Psoas muscle (tissue), 8 donors: ENCODE measurements at regions of chr10 and their contacts with region 1.

Region 1: GRCh38 chr10:5813287-5814109 is at the start of gene GDI2:
- DNase-seq: peak; percentile 96 to 97
- ATAC-seq: peak; percentile 97 to 98 (median 98)
- H3K4me3 ChIP-seq: peak within 1 kb of the TSS; percentile 95
- H3K27ac ChIP-seq: peak within 1 kb of the TSS; percentile 95
- H3K4me1 ChIP-seq: peaks cover 40% of the 10 kb centered on the region
- H3K27me3 ChIP-seq: no peaks in the 10 kb centered on the region
- CTCF ChIP-seq: no peak
- total RNA-seq, gene GDI2: 115 to 152 (median 118) TPM

Region 2: DNA sequence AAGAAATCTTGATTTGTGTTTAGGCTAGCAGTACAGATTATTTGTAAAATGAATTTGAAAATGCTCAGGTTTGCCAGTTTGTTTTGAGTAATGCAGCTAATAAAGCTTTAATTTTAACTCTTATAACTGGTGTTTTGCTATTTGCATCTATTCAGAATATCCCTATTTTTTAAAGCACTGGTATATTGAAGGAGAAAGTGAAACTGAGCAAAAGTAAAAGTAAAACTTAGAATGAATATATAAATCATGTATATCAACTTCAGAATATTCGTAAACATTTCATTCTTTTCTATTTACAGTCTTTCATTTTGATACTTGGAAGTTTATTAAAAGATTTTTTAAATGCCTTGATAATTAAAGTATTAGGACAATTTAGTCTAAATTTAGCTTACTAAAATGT is 102.6 kb before region 1 on chr10:
- intact Hi-C with region 1: no loop called
- DNase-seq: no peak
- ATAC-seq: no peak
- H3K4me3 ChIP-seq: peak overlapping the region; percentile 44
- H3K27ac ChIP-seq: no peak overlapping the region
- H3K4me1 ChIP-seq: peaks cover 14% of the 10 kb centered on the region
- H3K27me3 ChIP-seq: no peaks in the 10 kb centered on the region
- CTCF ChIP-seq: no peak

Region 3: GRCh38 chr10:5800790-5801189 is 12.7 kb before region 1 on chr10:
- intact Hi-C with region 1: no loop called
- DNase-seq: no peak
- ATAC-seq: peak in 1 of 4 donors; percentile 19
- H3K4me3 ChIP-seq: no peak overlapping the region
- H3K27ac ChIP-seq: no peak overlapping the region
- H3K4me1 ChIP-seq: peaks cover 11% of the 10 kb centered on the region
- H3K27me3 ChIP-seq: no peaks in the 10 kb centered on the region
- CTCF ChIP-seq: no peak

Region 4: GRCh38 chr10:5873515-5873995 is 60.1 kb after region 1 on chr10:
- intact Hi-C with region 1: loop called in 1 of 2 experiments (anchors 5 kb)
- DNase-seq: peak; percentile 32 to 64
- ATAC-seq: peak; percentile 62 to 88 (median 73)
- H3K4me3 ChIP-seq: no peak overlapping the region
- H3K27ac ChIP-seq: no peak overlapping the region
- H3K4me1 ChIP-seq: no peaks in the 10 kb centered on the region
- H3K27me3 ChIP-seq: no peaks in the 10 kb centered on the region
- CTCF ChIP-seq: peak; percentile 73

Region 5: GRCh38 chr10:5889624-5890451 is 76.3 kb after region 1 on chr10 and contains the starts of genes ANKRD16 and FBH1:
- intact Hi-C with region 1: loop called in 1 of 2 experiments (anchors 5 kb)
- DNase-seq: peak; percentile 99
- ATAC-seq: peak; percentile 94 to 96 (median 96)
- H3K4me3 ChIP-seq: peak within 1 kb of the TSS; percentile 93
- H3K27ac ChIP-seq: peak within 1 kb of the TSS; percentile 89
- H3K4me1 ChIP-seq: peaks cover 48% of the 10 kb centered on the region
- H3K27me3 ChIP-seq: no peaks in the 10 kb centered on the region
- CTCF ChIP-seq: no peak
- total RNA-seq, gene ANKRD16: 2.8 to 4.6 (median 3.2) TPM
- total RNA-seq, gene FBH1: 32.4 to 56.7 (median 39.9) TPM

Region 6: DNA sequence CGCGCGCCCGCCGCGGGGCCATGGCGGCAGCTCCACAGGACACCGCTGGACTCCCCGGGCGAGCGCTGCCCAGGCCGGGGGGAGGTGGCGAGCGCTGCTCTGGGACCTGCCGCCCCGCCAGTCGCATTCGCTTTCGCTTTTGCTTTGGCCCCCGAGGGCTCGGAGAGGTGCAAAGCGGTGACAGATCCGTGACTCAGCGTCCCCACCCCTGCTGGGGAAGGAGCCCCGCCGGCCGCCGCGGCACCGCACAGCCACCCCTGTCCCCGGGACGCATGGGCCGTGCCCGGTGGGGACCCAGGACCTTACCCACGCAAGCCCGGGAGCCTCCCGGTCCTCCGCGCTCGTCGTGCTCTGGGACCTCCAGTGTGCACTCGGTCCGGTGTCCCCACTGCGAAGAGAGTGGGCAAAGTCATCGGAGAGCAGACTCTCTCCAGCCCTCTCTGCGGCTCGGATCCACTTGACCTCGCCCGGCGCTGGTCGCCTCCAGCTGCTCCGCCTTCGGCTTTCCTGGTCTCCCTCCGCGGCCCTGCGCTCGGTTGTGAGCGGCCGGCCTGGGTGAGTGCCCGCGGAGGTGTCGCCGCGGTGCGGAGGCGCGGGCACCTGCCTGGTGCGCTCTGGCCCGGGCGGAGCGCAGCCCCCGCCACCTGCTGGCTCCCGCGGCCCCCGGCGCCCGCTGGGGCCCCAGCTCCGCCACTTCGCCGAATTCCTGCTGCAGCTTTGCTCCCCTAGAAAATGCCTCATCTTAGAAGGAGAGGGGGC is 164.2 kb after region 1 on chr10 and contains the start of gene IL15RA:
- intact Hi-C with region 1: loop called in 1 of 2 experiments (anchors 10 kb)
- DNase-seq: peak; percentile 80 to 88
- ATAC-seq: peak; percentile 84 to 87 (median 86)
- H3K4me3 ChIP-seq: peak within 1 kb of the TSS; percentile 89
- H3K27ac ChIP-seq: peak within 1 kb of the TSS; percentile 93
- H3K4me1 ChIP-seq: peaks cover 7% of the 10 kb centered on the region
- H3K27me3 ChIP-seq: no peaks in the 10 kb centered on the region
- CTCF ChIP-seq: peak; percentile 15
- total RNA-seq, gene IL15RA: 7.9 to 10.9 (median 9.5) TPM